ENCODE measurements at regions of chr3 and their contacts with region 1.

Region 1: GRCh38 chr3:13895155-13896105 is 15.6 kb upstream of the WNT7A start:
- DNase-seq: peak; percentile 98
- H3K4me3 ChIP-seq: peak overlapping the region; percentile 61 to 73 (median 66)
- H3K27ac ChIP-seq: peak overlapping the region; percentile 69 to 80 (median 78)
- H3K4me1 ChIP-seq: peaks cover 5 to 21% (median 19%) of the 10 kb centered on the region in 4 donors
- H3K27me3 ChIP-seq: no peaks in the 10 kb centered on the region
- CTCF ChIP-seq: peak in 1 of 3 experiments; percentile 7
- EP300 ChIP-seq: no peak
- POLR2A ChIP-seq: peak; percentile 38

Region 2: GRCh38 chr3:13950042-13950441 is 54.6 kb after region 1 on chr3:
- intact Hi-C with region 1: no loop called
- DNase-seq: no peak
- H3K4me3 ChIP-seq: no peak overlapping the region
- H3K27ac ChIP-seq: no peak overlapping the region
- H3K4me1 ChIP-seq: no peaks in the 10 kb centered on the region
- H3K27me3 ChIP-seq: no peaks in the 10 kb centered on the region
- CTCF ChIP-seq: no peak
- EP300 ChIP-seq: no peak
- POLR2A ChIP-seq: no peak

Region 3: DNA sequence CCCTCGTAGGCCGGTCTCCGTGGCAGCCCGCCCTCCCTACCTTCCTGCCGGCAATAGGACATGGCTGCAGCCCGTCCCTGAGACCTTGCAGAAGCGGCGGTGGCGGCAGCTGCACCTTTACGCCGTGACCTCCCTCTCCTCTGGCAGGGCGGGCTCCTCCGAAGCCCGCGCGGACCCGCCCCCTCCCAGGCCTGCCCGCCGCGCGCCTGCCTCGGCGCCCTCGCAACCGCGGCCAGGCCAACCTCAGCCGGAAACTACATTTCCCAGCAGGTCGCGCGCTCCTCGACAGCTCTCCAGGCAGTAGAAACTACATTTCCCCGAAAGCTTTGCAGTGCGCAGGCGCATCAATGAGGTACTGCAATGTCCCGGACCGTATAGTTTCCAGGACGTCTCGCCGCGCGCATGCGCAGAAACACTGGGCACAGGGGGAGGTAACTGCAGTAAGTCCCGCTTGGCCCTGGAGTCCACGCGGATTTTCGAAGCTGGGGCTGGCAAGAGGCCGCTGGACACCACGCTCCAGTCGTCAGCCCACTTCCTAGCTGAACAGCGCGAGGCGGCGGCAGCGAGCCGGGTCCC is 229.3 kb after region 1 on chr3 and contains the starts of genes CHCHD4 and TMEM43:
- intact Hi-C with region 1: loop called (anchors 5 kb)
- DNase-seq: peak; percentile 100
- H3K4me3 ChIP-seq: peak within 1 kb of the TSS; percentile 68 to 94 (median 82)
- H3K27ac ChIP-seq: peak within 1 kb of the TSS; percentile 96 to 99 (median 96)
- H3K4me1 ChIP-seq: peaks cover 37 to 55% (median 43%) of the 10 kb centered on the region in 4 donors
- H3K27me3 ChIP-seq: no peaks in the 10 kb centered on the region
- CTCF ChIP-seq: peak in 1 of 3 experiments; percentile 23
- EP300 ChIP-seq: no peak
- POLR2A ChIP-seq: peak; percentile 84
- total RNA-seq, gene CHCHD4: 21.2 to 27.0 (median 24.3) TPM
- total RNA-seq, gene TMEM43: 131 to 208 (median 179) TPM

Region 4: GRCh38 chr3:14178247-14179113 is 283.1 kb after region 1 on chr3 and contains the starts of genes LSM3 and XPC:
- intact Hi-C with region 1: loop called (anchors 10 kb)
- DNase-seq: peak; percentile 99
- H3K4me3 ChIP-seq: peak within 1 kb of the TSS; percentile 65 to 96 (median 77)
- H3K27ac ChIP-seq: peak within 1 kb of the TSS; percentile 89 to 98 (median 96)
- H3K4me1 ChIP-seq: peaks cover 23 to 58% (median 41%) of the 10 kb centered on the region in 4 donors
- H3K27me3 ChIP-seq: no peaks in the 10 kb centered on the region
- CTCF ChIP-seq: no peak
- EP300 ChIP-seq: no peak
- POLR2A ChIP-seq: peak; percentile 82
- total RNA-seq, gene LSM3: 8.0 to 12.0 (median 9.6) TPM
- total RNA-seq, gene XPC: 28.9 to 41.9 (median 37.8) TPM

Region 5: DNA sequence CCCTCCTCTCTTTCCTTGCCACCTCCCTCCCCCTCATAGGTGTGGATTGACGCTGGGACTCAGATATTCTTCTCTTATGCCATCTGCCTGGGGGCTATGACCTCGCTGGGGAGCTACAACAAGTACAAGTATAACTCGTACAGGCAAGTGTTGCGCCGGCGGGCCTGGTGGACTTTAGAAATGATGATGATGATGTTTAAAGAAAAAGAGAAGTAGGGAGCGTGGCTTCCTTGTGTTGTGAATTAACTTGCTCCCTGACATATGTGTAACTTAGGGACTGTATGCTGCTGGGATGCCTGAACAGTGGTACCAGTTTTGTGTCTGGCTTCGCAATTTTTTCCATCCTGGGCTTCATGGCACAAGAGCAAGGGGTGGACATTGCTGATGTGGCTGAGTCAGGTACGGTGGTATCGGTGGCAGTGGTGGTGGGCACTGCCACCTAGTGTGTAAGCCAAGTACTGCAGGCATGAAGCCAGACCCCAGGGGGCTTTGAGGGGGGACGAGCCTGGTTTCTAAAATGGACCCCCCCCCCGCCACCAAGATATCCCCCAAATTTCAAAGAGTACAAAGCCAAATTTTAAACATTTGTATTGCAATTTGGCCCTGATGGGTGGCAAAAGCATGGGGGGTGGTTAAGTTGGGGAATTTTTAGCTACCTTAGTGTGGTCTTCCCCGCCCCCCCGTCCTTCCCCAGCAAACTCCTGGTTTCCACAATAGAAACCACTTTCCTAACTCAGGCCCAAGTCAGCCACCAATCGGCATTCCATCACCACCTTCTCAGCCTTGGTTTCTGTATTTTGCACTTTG is 572.6 kb after region 1 on chr3:
- intact Hi-C with region 1: loop called (anchors 5 kb)
- DNase-seq: no peak
- H3K4me3 ChIP-seq: no peak overlapping the region
- H3K27ac ChIP-seq: no peak overlapping the region
- H3K4me1 ChIP-seq: peaks cover 0 to 8% (median 5%) of the 10 kb centered on the region in 4 donors
- H3K27me3 ChIP-seq: no peaks in the 10 kb centered on the region
- CTCF ChIP-seq: peak; percentile 86 to 95 (median 92)
- EP300 ChIP-seq: no peak
- POLR2A ChIP-seq: no peak

Measured in esophagus muscularis mucosa (tissue), 4 donors.